ENCODE measurements at regions of chr2 and their contacts with region 1.

Region 1: GRCh38 chr2:241734467-241735208 is at the start of gene D2HGDH:
- DNase-seq: peak in 1 of 2 donors; percentile 90
- H3K4me3 ChIP-seq: peak within 1 kb of the TSS; percentile 88 to 98
- H3K27ac ChIP-seq: peak within 1 kb of the TSS; percentile 90
- H3K4me1 ChIP-seq: peaks cover 30% of the 10 kb centered on the region
- H3K27me3 ChIP-seq: no peaks in the 10 kb centered on the region
- CTCF ChIP-seq: no peak
- POLR2A ChIP-seq: peak in 1 of 2 donors; percentile 85
- total RNA-seq, gene D2HGDH: 21.1 TPM

Region 2: GRCh38 chr2:241777686-241778627 is 43.3 kb after region 1 on chr2:
- intact Hi-C with region 1: no loop called
- DNase-seq: peak in 1 of 2 donors; percentile 81
- H3K4me3 ChIP-seq: no peak overlapping the region
- H3K27ac ChIP-seq: no peak overlapping the region
- H3K4me1 ChIP-seq: no peaks in the 10 kb centered on the region
- H3K27me3 ChIP-seq: no peaks in the 10 kb centered on the region
- CTCF ChIP-seq: no peak
- POLR2A ChIP-seq: no peak

Region 3: GRCh38 chr2:242088471-242089212 is 354.0 kb after region 1 on chr2:
- intact Hi-C with region 1: loop called (anchors 5 kb)
- DNase-seq: peak in 1 of 2 donors; percentile 90
- H3K4me3 ChIP-seq: peak overlapping the region; percentile 93 to 95
- H3K27ac ChIP-seq: peak overlapping the region; percentile 72
- H3K4me1 ChIP-seq: peaks cover 6% of the 10 kb centered on the region
- H3K27me3 ChIP-seq: no peaks in the 10 kb centered on the region
- CTCF ChIP-seq: no peak
- POLR2A ChIP-seq: peak in 1 of 2 donors; percentile 40